Posterior cingulate gyrus (tissue), 11 donors: ENCODE measurements at regions of chrX and their contacts with region 1.

Region 1: DNA sequence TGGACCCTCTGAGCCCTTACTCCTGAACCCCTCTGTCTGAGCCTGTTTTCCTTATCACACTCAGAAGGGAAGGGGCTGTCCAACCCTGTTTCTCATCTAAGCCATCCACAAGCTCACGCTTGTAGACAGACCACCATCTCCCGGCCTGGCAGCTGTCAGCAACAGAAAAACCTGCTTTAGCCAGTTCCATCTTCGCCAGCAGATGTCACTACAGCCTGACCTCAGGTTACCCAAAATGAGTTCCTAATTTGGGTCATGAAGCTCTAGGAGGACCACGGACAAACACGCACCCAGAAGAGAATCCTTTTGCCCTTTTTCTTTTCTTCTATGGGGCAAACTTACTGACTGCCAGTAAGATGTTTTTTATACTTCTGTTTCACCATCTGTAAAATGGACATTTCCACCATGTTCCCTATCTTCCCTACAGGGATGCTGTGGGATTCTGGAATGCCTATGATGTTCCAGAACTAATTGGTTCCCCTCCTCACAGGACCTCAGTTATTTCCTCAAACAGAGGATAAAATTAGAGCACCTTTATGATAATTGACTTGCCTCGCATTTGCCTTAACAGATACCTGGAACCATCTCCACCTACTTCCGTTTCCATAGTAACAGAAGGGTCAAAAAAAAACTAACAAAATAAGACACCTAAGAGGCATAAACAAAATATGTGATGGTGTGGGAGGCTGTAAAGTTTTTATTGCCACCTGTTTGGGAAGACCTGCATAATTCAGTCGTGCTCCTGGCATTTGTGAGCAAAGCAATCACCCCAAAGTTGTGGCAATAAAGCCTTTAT is 445.2 kb downstream of the BCOR start:
- DNase-seq: peak in 2 of 10 donors; percentile 33 to 41

Region 2: DNA sequence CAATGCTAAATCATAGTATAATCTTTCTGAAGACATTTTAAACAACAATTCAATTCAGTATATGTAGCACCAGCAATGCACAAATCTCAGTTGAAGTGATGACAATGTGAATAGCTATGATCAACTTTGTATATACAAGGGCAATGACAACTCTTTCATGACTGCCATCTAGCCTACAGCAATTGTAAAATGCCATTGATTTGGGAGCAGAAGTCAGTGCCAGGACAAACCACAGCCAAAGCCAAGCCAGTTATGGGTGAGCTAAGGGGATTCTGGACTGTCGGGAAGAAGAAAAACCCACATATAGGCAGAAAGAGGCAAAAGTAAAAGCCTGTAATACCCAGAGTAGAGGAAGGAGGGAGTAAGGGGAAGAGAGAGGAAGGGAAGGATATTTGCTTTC is 612.6 kb before region 1 on chrX:
- intact Hi-C with region 1: no loop called
- DNase-seq: no peak

Region 3: GRCh38 chrX:39487166-39487968 is 165.2 kb before region 1 on chrX:
- intact Hi-C with region 1: no loop called
- DNase-seq: no peak

Region 4: DNA sequence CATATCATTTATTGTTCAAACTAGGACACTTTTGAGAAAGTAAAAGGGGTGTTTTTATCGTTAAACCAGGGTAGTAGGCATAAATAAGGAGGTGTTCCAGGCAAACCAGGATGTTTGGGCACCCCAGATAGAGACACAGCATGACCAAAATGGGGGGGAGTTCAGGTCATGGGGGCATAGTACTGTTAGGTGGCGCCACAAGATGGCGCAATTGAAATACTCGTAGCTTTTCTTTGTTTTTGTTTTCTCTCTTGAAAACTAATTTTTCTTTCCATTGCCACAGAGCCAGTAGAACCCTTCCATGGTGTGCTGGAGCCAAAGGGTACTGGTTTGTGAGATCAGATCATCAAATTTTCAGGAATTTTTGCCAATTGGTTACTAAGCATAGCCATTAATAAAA is 161.9 kb after region 1 on chrX:
- intact Hi-C with region 1: loop called (anchors 2 kb)
- DNase-seq: no peak